Activated CD4-positive, alpha-beta T cell treated with anti-CD3 and anti-CD28 coated beads, Interleukin-2, amount 10 ng/mL, durations not matched to agents 24 days and 14 days (primary cell): ENCODE measurements at regions of chr19 and their contacts with region 1.

Region 1: GRCh38 chr19:6737284-6738046 is at the start of gene GPR108:
- DNase-seq: peak; percentile 100
- H3K4me3 Mint-ChIP-seq: peak within 1 kb of the TSS; percentile 98
- H3K27ac Mint-ChIP-seq: peak within 1 kb of the TSS; percentile 99
- H3K4me1 Mint-ChIP-seq: peaks cover 38% of the 10 kb centered on the region
- H3K27me3 Mint-ChIP-seq: no peaks in the 10 kb centered on the region
- total RNA-seq, gene GPR108: 97.7 and 107 TPM in 2 replicates

Region 2: GRCh38 chr19:6516659-6517291 is 220.7 kb before region 1 on chr19:
- intact Hi-C with region 1: loop called (anchors 1 kb)
- DNase-seq: peak; percentile 97
- H3K4me3 Mint-ChIP-seq: peak overlapping the region; percentile 94
- H3K27ac Mint-ChIP-seq: peak overlapping the region; percentile 95
- H3K4me1 Mint-ChIP-seq: peaks cover 34% of the 10 kb centered on the region
- H3K27me3 Mint-ChIP-seq: no peaks in the 10 kb centered on the region

Region 3: GRCh38 chr19:6632002-6632621 is 105.4 kb before region 1 on chr19:
- intact Hi-C with region 1: loop called (anchors 1 kb)
- DNase-seq: peak; percentile 96
- H3K4me3 Mint-ChIP-seq: no peak overlapping the region
- H3K27ac Mint-ChIP-seq: no peak overlapping the region
- H3K4me1 Mint-ChIP-seq: peaks cover 26% of the 10 kb centered on the region
- H3K27me3 Mint-ChIP-seq: peaks cover 2% of the 10 kb centered on the region

Region 4: GRCh38 chr19:6674868-6675305 is 62.6 kb before region 1 on chr19:
- intact Hi-C with region 1: loop called (anchors 2 kb)
- DNase-seq: peak; percentile 95
- H3K4me3 Mint-ChIP-seq: peak overlapping the region; percentile 71
- H3K27ac Mint-ChIP-seq: peak overlapping the region; percentile 93
- H3K4me1 Mint-ChIP-seq: peaks cover 67% of the 10 kb centered on the region
- H3K27me3 Mint-ChIP-seq: peaks cover 3% of the 10 kb centered on the region

Region 5: DNA sequence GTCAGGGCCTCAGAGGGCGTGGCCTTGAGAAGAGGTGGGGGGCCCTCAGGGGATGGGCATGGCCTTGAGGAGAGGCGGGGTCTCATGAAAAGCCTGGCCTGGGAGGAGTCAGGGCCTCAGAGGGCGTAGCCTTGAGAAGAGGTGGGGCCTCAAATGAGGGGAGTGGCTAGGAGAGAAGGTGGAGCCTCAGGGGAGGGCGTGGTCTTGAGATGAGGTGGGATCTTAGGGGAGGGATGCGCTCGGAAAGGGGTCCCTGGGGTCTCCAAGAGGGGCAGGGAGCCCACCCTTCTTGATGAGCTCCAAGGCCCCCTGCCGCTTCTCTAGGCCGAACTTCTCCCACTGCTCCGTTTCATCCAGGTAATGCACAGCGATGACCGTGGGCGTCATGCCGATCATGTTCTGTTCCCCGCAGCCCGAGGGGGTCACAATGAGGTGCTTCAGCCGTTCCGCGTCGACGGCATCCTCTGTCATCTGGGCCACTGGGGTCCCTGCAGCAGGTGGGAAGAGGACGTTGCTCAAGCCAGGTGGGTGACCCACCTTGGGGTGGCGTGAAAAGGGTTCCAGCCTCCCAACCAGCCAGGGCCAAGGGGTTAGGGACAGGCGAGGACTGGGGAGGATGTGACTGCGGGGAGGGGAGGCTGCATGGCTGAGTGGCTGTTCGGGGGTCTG is 43.2 kb before region 1 on chr19:
- intact Hi-C with region 1: no loop called
- DNase-seq: no peak
- H3K4me3 Mint-ChIP-seq: no peak overlapping the region
- H3K27ac Mint-ChIP-seq: no peak overlapping the region
- H3K4me1 Mint-ChIP-seq: peaks cover 4% of the 10 kb centered on the region
- H3K27me3 Mint-ChIP-seq: peaks cover 2% of the 10 kb centered on the region

Region 6: GRCh38 chr19:6767357-6768235 is 30.1 kb after region 1 on chr19 and contains the start of gene SH2D3A:
- intact Hi-C with region 1: loop called (anchors 1 kb)
- DNase-seq: peak; percentile 98
- H3K4me3 Mint-ChIP-seq: peak within 1 kb of the TSS; percentile 88
- H3K27ac Mint-ChIP-seq: peak within 1 kb of the TSS; percentile 92
- H3K4me1 Mint-ChIP-seq: peaks cover 46% of the 10 kb centered on the region
- H3K27me3 Mint-ChIP-seq: no peaks in the 10 kb centered on the region
- total RNA-seq, gene SH2D3A: 9.8 and 11.0 TPM in 2 replicates

Region 7: GRCh38 chr19:6779206-6779605 is 41.7 kb after region 1 on chr19:
- intact Hi-C with region 1: no loop called
- DNase-seq: no peak
- H3K4me3 Mint-ChIP-seq: no peak overlapping the region
- H3K27ac Mint-ChIP-seq: peak overlapping the region; percentile 51
- H3K4me1 Mint-ChIP-seq: peaks cover 46% of the 10 kb centered on the region
- H3K27me3 Mint-ChIP-seq: no peaks in the 10 kb centered on the region

Region 8: DNA sequence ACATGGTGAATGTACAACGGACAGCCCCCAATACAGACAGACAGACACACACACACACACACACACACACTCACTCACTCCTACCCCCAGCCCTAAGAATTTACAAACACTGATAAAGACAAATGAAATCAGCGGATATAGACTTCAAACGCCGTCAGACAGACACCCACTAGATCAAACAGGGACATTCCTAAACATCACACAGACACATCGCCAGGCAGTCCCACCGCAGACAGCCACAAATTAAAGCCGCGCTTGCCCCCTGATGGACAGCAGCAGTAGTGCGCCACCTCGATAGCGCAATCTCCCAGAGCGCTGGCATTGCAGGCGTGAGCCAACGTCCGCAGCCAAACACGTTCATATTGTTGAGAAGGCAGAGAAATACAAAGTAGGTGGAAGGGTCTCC is 125.2 kb after region 1 on chr19:
- intact Hi-C with region 1: loop called (anchors 1 kb)
- DNase-seq: peak; percentile 97
- H3K4me3 Mint-ChIP-seq: peak overlapping the region; percentile 84
- H3K27ac Mint-ChIP-seq: peak overlapping the region; percentile 68
- H3K4me1 Mint-ChIP-seq: peaks cover 17% of the 10 kb centered on the region
- H3K27me3 Mint-ChIP-seq: no peaks in the 10 kb centered on the region

Region 9: DNA sequence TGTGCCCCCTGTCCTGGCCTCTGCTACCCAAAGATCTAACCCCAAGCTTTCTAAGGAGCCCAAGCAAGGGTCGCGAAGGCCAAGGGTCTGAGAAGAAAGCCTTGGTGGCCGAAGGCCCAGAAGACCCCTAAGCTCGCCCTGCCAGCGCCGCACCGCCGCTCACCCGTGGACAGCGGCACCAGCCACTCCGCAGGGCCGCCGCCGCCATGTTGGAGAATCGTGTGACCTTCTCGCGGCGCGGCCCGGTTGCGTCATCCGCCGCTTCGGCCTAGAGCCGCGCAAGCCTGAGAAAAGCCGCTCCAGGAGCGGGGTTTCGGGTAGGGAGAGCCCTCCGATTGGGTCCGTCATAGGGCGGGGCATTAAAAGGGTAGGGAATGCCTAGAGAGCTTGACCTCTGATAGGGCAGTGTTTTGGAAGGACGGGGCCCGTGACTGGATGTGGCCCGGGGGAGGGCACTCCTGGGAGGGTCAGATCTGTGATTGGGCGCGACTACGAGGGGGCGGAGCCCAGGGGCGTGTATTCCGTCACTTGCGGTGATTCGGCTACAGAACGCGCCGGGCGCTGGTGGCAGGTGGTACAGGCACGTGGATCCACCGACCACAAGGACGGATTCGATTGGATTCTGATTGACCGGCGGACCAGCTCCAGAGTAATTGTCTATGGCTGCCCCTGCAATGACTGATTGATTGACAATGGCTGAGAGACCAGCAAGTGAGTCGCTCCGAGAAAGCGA is 1206.1 kb after region 1 on chr19 and contains the start of gene TIMM44:
- intact Hi-C with region 1: loop called (anchors 5 kb)
- DNase-seq: peak; percentile 100
- H3K4me3 Mint-ChIP-seq: peak within 1 kb of the TSS; percentile 98
- H3K27ac Mint-ChIP-seq: peak within 1 kb of the TSS; percentile 98
- H3K4me1 Mint-ChIP-seq: peaks cover 22% of the 10 kb centered on the region
- H3K27me3 Mint-ChIP-seq: no peaks in the 10 kb centered on the region
- total RNA-seq, gene TIMM44: 110 and 111 TPM in 2 replicates